CD4-positive, alpha-beta memory T cell (primary cell): ENCODE measurements at regions of chr19 and their contacts with region 1.

Region 1: DNA sequence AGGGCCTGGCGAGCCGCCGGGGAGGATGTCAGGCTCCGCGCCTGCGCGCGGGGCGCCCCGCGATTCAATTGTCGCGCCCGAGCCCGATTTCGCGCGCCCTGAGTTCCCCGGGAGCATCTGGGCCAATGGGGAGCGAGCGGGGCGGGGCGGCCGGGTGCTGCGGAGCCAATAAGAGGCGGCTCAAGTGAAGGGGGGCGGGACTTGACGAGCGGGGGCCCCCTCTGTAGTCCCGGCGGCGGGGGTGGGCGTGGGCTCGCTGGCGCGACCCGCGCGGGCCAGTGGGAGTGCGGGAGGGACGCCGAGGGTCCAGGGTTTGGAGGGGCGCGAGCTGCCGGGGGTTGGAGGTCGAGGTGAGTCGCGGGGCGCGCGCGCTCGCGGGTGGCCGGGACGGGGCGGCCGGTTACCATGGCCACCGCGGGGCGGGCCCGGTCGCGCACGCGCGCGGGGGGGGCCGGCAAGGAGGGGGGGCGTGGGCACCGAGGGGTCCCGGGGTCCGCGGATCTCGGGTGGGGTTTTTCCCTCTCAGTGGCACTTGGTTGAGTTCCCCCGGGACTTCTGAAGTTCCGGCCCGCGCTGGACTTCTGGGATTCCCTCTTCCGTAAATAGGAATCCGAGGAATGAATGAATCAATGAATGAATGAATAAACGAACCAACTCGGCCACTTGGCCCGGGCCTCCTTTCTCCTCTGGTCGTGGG is 744 bp downstream of the UHRF1 start:
- DNase-seq: peak; percentile 92 to 95 (median 93)
- H3K4me3 ChIP-seq: peak overlapping the region; percentile 49 to 71
- H3K4me3 Mint-ChIP-seq: peak overlapping the region; percentile 84 to 100 (median 92)
- H3K27ac ChIP-seq: peak overlapping the region; percentile 33
- H3K27ac Mint-ChIP-seq: peak overlapping the region in 5 of 7 donors; percentile 14 to 98 (median 66)
- H3K4me1 ChIP-seq: peaks cover 57% of the 10 kb centered on the region
- H3K4me1 Mint-ChIP-seq: peaks cover 23 to 55% (median 44%) of the 10 kb centered on the region in 4 donors
- H3K27me3 ChIP-seq: no peaks in the 10 kb centered on the region
- H3K27me3 Mint-ChIP-seq: no peaks in the 10 kb centered on the region

Region 2: DNA sequence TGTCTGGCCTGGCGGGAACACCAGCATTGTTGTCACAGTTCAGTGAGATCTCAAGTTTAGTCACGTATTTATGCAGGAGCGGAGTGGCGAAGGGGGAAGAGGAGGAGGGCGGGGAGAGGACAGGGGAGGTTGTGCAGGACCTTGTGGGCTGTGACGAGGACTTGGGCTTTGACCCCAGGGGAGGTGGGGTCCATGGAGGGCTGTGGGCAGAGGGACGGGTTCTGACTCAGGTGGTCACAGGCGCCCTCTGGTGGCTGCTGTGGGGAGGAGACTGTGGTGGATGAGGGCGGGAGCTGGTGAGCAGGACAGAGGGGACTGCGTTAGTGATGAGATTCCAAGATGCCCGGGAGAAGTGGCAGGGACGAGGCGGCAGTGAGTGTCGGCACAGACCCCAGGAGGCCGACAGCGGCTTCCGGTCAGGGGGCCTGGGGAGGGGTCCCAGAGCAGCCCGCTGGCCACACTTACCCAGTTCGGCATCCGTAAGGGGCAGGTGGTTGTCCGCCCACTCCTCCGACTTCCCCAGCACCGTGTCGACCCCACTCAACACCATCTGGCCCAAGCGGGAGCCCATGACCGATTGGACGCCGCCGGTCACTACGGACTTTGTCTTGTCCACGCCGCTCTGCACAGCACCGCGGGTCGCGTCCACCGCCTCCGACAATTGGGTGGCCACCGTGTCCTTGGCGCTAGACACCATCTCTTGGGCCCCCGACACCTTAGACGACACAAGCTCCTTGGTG is 58.3 kb before region 1 on chr19:
- CTCF ChIA-PET with region 1: interaction called, 11 read pairs
- POLR2A ChIA-PET with region 1: interaction called, 3 read pairs
- intact Hi-C with region 1: no loop called
- DNase-seq: peak; percentile 52 to 72 (median 66)
- H3K4me3 ChIP-seq: no peak overlapping the region
- H3K4me3 Mint-ChIP-seq: no peak overlapping the region
- H3K27ac ChIP-seq: no peak overlapping the region
- H3K27ac Mint-ChIP-seq: peak overlapping the region in 3 of 7 donors; percentile 30 to 47 (median 41)
- H3K4me1 ChIP-seq: no peaks in the 10 kb centered on the region
- H3K4me1 Mint-ChIP-seq: peaks cover 0 to 4% (median 2%) of the 10 kb centered on the region in 4 donors
- H3K27me3 ChIP-seq: no peaks in the 10 kb centered on the region
- H3K27me3 Mint-ChIP-seq: no peaks in the 10 kb centered on the region

Region 3: DNA sequence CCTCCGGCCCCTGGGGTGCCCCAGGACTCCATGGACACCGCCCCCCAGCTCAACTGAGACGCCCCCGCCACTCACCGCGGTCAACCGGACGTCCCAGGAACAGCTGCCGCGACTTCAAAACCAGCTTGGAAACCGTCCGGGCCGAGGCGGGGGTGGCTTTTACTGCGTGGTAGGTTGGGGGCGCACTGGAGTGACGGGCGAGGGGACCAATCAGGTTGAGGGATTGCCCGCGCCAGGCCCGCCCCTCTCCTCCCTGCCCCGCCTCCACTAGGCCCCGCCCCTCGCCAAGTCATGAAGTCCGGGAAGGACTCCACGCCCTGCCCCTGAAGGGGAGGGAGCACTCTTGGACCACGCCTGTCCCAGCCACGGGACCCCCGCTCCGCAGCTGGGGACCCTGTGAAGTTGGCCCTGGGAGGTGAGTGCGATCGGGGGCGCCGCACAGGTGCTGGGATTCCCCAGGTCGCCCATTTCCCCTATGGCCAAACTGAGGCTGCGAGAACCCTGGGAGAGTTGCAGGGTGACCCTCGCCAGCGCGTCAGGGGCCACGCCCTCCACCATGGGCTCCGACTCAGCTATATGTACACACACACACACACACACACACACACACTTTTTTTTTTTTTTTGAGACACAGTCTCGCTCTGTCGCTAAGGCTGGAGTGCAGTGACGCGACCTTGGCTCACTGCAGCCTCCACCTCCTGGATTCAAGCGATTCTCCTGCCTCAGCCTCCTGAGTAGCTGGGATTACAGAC is 42.3 kb before region 1 on chr19 and contains the start of gene PLIN3:
- CTCF ChIA-PET with region 1: interaction called, 225 read pairs
- POLR2A ChIA-PET with region 1: interaction called, 41 read pairs
- intact Hi-C with region 1: loop called (anchors 1 kb)
- DNase-seq: peak; percentile 78 to 89 (median 79)
- H3K4me3 ChIP-seq: peak within 1 kb of the TSS; percentile 60 to 76
- H3K4me3 Mint-ChIP-seq: peak within 1 kb of the TSS; percentile 85 to 92 (median 86)
- H3K27ac ChIP-seq: peak within 1 kb of the TSS; percentile 74
- H3K27ac Mint-ChIP-seq: peak within 1 kb of the TSS; percentile 79 to 91 (median 87)
- H3K4me1 ChIP-seq: peaks cover 10% of the 10 kb centered on the region
- H3K4me1 Mint-ChIP-seq: peaks cover 10 to 21% (median 14%) of the 10 kb centered on the region in 4 donors
- H3K27me3 ChIP-seq: no peaks in the 10 kb centered on the region
- H3K27me3 Mint-ChIP-seq: peaks cover 2 to 3% of the 10 kb centered on the region in 2 donors
- total RNA-seq, gene PLIN3: 16.0 to 18.2 TPM

Region 4: DNA sequence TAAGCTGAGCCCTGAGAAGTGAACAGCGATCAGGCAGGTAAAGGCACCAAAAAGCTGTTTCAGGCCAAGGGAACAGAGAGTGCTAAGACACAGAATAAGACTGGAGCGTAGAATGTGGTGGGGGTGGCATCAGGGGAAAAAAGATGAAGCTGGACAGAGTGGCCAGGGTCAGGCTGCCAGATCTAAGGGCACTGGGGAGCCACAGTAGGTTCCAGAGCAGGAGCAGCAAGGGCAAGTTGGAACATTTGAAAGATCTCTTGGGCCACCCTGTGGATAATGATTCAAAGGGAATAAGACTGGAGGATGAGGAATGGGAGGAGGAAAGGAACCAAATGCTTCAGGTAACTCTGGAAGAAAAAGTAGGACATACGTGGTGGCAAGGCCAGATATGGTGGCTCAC is 36.1 kb before region 1 on chr19:
- CTCF ChIA-PET with region 1: interaction called, 225 read pairs
- POLR2A ChIA-PET with region 1: interaction called, 41 read pairs
- intact Hi-C with region 1: loop called (anchors 1 kb)
- DNase-seq: no peak
- H3K4me3 ChIP-seq: no peak overlapping the region
- H3K4me3 Mint-ChIP-seq: no peak overlapping the region
- H3K27ac ChIP-seq: no peak overlapping the region
- H3K27ac Mint-ChIP-seq: no peak overlapping the region
- H3K4me1 ChIP-seq: no peaks in the 10 kb centered on the region
- H3K4me1 Mint-ChIP-seq: peaks cover 3 to 5% (median 4%) of the 10 kb centered on the region in 4 donors
- H3K27me3 ChIP-seq: no peaks in the 10 kb centered on the region
- H3K27me3 Mint-ChIP-seq: peaks cover 2 to 4% of the 10 kb centered on the region in 2 donors

Region 5: GRCh38 chr19:4968462-4969291 is 58.6 kb after region 1 on chr19 and contains the start of gene KDM4B:
- CTCF ChIA-PET with region 1: interaction called, 26 read pairs
- POLR2A ChIA-PET with region 1: interaction called, 113 read pairs
- intact Hi-C with region 1: loop called (anchors 1 kb)
- DNase-seq: peak; percentile 99 to 100 (median 100)
- H3K4me3 ChIP-seq: peak within 1 kb of the TSS; percentile 33 to 66
- H3K4me3 Mint-ChIP-seq: peak within 1 kb of the TSS; percentile 89 to 97 (median 92)
- H3K27ac ChIP-seq: peak within 1 kb of the TSS; percentile 42
- H3K27ac Mint-ChIP-seq: peak within 1 kb of the TSS; percentile 83 to 97 (median 94)
- H3K4me1 ChIP-seq: peaks cover 37% of the 10 kb centered on the region
- H3K4me1 Mint-ChIP-seq: peaks cover 24 to 40% (median 33%) of the 10 kb centered on the region in 4 donors
- H3K27me3 ChIP-seq: no peaks in the 10 kb centered on the region
- H3K27me3 Mint-ChIP-seq: no peaks in the 10 kb centered on the region
- total RNA-seq, gene KDM4B: 47.9 to 50.4 TPM

Region 6: GRCh38 chr19:5031231-5032100 is 121.4 kb after region 1 on chr19:
- CTCF ChIA-PET with region 1: interaction called, 18 read pairs
- POLR2A ChIA-PET with region 1: interaction called, 3 read pairs
- intact Hi-C with region 1: no loop called
- DNase-seq: peak; percentile 67 to 80 (median 71)
- H3K4me3 ChIP-seq: no peak overlapping the region
- H3K4me3 Mint-ChIP-seq: no peak overlapping the region
- H3K27ac ChIP-seq: no peak overlapping the region
- H3K27ac Mint-ChIP-seq: peak overlapping the region in 1 of 7 donors; percentile 18
- H3K4me1 ChIP-seq: peaks cover 7% of the 10 kb centered on the region
- H3K4me1 Mint-ChIP-seq: peaks cover 0 to 17% (median 7%) of the 10 kb centered on the region in 4 donors
- H3K27me3 ChIP-seq: no peaks in the 10 kb centered on the region
- H3K27me3 Mint-ChIP-seq: no peaks in the 10 kb centered on the region